ENCODE measurements at regions of chr22 and their contacts with region 1.

Region 1: DNA sequence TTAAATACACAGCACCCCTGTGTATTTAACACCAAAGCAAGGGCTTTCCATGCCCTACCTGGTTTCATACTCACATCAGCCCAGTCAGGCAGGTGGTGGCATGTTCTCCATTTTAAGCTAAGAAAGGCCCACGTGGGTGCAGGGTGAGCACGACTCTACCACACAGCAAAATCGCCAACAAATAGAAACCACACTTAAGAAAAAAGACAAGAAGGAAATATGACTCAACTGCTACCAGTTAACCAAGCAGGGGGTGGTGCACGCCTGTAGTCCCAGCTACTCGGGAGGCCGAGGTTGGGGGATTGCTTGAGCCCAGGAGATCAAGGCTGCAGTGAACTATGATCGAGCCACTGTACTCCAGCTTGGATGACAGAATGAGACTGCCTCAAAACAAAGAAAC is 35.2 kb upstream of the TFIP11 start:
- DNase-seq: peak; percentile 21 to 27
- ATAC-seq: peak; percentile 53 to 75 (median 73)
- H3K4me3 ChIP-seq: no peak overlapping the region
- H3K4me3 Mint-ChIP-seq: peak overlapping the region; percentile 54
- H3K27ac ChIP-seq: peak overlapping the region; percentile 44
- H3K27ac Mint-ChIP-seq: peak overlapping the region; percentile 81 to 91
- H3K4me1 ChIP-seq: peaks cover 90% of the 10 kb centered on the region
- H3K4me1 Mint-ChIP-seq: peaks cover 82 to 87% of the 10 kb centered on the region in 2 donors
- H3K27me3 ChIP-seq: no peaks in the 10 kb centered on the region
- H3K27me3 Mint-ChIP-seq: no peaks in the 10 kb centered on the region
- CTCF ChIP-seq: no peak

Region 2: DNA sequence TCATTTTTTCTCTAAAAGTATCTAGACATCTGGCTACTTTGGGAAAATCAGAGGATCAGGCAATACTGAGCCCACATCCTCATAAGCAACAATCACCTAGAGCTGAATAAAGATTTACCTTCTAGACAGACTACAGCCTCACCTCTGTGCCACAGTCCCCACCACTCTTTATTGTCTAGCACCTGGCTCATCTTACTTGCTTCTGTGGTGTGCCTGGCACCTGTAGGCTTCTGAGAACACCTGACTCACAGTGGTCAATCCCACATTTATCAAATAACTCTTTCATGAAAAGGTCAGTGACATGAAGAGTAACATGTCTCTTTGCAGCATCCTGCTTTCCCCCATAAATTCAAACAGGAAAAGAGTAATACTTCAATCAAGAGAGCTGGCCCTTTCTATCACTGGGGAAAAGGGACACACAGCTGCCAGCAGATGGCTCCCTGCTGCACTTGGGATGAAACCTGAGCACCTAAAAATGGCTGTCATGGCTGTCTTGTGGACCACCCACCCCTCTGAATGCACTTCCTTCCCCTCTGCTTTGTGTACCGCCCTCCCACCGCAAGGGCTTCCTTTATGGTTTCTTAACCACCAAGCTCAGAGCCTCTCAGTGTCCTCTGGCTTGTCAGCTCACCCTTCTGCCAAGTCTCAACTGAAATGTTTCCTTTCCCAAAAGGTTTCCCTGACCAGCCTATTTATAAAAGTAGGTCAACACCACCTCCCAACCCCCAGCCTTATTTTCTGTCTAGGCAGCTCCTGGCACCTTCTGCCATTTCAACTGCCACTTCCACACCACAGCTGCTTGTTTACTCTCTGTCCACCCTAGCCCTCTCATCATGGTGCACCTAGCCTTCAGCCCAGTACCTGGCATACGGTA is 44.5 kb before region 1 on chr22:
- intact Hi-C with region 1: loop called (anchors 5 kb)
- DNase-seq: peak; percentile 57 to 84
- ATAC-seq: peak; percentile 88 to 91 (median 89)
- H3K4me3 ChIP-seq: no peak overlapping the region
- H3K4me3 Mint-ChIP-seq: peak overlapping the region; percentile 79
- H3K27ac ChIP-seq: peak overlapping the region; percentile 63
- H3K27ac Mint-ChIP-seq: peak overlapping the region; percentile 87 to 93
- H3K4me1 ChIP-seq: peaks cover 19% of the 10 kb centered on the region
- H3K4me1 Mint-ChIP-seq: peaks cover 26% of the 10 kb centered on the region in 2 donors
- H3K27me3 ChIP-seq: no peaks in the 10 kb centered on the region
- H3K27me3 Mint-ChIP-seq: no peaks in the 10 kb centered on the region
- CTCF ChIP-seq: peak; percentile 63

Measured in natural killer cell (primary cell).